ENCODE measurements at regions of chr11 and their contacts with region 1.

Region 1: DNA sequence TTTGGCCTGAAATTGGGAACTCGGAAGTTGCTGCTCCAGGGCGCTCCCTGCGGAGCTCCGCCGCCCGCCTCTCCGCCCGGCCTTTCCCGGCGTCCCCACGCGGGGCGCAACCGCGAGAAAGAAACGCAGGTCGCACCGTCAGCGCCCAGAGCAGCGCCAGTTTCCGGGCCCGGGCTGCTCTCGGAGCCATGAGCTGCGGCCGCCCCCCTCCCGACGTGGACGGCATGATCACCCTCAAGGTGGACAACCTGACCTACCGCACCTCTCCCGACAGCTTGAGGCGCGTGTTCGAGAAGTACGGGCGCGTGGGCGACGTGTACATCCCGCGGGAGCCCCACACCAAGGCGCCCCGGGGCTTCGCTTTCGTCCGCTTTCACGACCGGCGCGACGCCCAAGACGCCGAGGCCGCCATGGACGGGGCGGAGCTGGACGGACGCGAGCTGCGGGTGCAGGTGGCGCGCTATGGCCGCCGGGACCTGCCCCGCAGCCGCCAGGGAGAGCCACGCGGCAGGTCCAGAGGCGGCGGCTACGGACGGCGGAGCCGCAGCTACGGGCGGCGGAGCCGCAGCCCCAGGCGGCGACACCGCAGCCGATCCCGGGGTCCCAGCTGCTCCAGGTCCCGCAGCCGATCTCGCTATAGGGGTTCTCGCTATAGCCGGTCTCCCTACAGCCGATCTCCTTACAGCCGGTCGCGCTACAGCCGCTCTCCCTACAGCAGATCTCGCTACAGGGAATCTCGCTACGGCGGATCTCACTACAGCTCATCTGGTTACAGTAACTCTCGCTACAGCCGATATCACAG is 521 bp downstream of the SRSF8 start:
- DNase-seq: peak; percentile 62 to 79 (median 74)
- ATAC-seq: peak; percentile 81
- H3K4me3 ChIP-seq: peak overlapping the region; percentile 87
- H3K4me3 Mint-ChIP-seq: peak overlapping the region; percentile 93 to 100 (median 96)
- H3K27ac ChIP-seq: peak overlapping the region; percentile 96
- H3K27ac Mint-ChIP-seq: peak overlapping the region; percentile 93 to 100 (median 97)
- H3K4me1 ChIP-seq: peaks cover 16 to 17% of the 10 kb centered on the region in 2 donors
- H3K4me1 Mint-ChIP-seq: peaks cover 17 to 38% (median 30%) of the 10 kb centered on the region in 7 donors
- H3K27me3 ChIP-seq: no peaks in the 10 kb centered on the region
- H3K27me3 Mint-ChIP-seq: peaks cover 0 to 23% (median 0%) of the 10 kb centered on the region in 5 donors

Region 2: DNA sequence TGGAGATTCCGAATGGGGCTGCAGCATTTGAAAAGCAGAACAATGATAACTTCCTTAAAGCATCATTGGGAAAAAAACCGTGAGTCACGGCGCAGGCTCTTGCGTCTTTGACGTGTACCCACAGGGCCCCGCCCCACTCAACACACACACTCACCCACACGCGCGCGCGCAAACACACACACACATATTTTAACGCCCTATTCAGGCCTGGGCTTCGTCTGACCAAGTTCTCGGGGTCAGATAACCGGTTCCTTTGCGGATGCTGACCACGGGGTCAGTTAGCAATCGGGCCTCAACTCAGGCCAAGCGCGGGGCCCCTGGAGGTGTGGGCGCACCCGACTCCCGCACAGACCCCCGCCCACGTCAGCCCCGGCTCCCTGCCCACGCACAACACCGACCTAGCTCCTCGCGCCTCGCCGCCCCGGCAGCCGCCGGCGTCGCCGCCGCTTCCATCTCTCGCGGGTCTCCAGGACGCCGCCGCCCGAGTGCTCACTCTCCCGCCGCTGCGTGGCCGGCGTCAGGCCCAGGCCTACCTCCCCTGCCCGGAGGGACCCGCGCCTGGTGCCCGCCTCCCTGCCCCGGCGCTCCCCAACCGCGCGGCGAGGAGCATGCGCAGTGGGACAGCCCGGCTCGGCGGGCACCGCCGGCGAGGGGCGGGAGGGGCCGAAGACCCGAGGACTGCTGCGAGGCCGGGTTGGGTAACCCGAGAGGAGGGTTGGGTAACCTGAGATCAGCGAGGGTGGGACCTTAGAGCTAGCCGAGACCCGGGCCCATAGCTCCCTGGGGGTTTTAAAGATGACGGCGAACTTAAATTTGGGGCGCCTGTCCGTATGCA is 1869.6 kb before region 1 on chr11 and contains the start of gene SLC36A4:
- CTCF ChIA-PET with region 1: no interaction called
- POLR2A ChIA-PET with region 1: interaction called, 3 read pairs
- intact Hi-C with region 1: loop called (anchors 5 to 10 kb)
- DNase-seq: peak; percentile 78 to 90 (median 88)
- ATAC-seq: peak; percentile 94
- H3K4me3 ChIP-seq: peak within 1 kb of the TSS; percentile 54
- H3K4me3 Mint-ChIP-seq: peak within 1 kb of the TSS; percentile 88 to 98 (median 95)
- H3K27ac ChIP-seq: peak within 1 kb of the TSS; percentile 96
- H3K27ac Mint-ChIP-seq: peak within 1 kb of the TSS; percentile 87 to 99 (median 97)
- H3K4me1 ChIP-seq: peaks cover 0 to 4% of the 10 kb centered on the region in 2 donors
- H3K4me1 Mint-ChIP-seq: peaks cover 15 to 40% (median 30%) of the 10 kb centered on the region in 7 donors
- H3K27me3 ChIP-seq: no peaks in the 10 kb centered on the region
- H3K27me3 Mint-ChIP-seq: peaks cover 0 to 24% (median 5%) of the 10 kb centered on the region in 5 donors
- total RNA-seq, gene SLC36A4: 12.0 to 22.0 (median 20.0) TPM

Region 3: DNA sequence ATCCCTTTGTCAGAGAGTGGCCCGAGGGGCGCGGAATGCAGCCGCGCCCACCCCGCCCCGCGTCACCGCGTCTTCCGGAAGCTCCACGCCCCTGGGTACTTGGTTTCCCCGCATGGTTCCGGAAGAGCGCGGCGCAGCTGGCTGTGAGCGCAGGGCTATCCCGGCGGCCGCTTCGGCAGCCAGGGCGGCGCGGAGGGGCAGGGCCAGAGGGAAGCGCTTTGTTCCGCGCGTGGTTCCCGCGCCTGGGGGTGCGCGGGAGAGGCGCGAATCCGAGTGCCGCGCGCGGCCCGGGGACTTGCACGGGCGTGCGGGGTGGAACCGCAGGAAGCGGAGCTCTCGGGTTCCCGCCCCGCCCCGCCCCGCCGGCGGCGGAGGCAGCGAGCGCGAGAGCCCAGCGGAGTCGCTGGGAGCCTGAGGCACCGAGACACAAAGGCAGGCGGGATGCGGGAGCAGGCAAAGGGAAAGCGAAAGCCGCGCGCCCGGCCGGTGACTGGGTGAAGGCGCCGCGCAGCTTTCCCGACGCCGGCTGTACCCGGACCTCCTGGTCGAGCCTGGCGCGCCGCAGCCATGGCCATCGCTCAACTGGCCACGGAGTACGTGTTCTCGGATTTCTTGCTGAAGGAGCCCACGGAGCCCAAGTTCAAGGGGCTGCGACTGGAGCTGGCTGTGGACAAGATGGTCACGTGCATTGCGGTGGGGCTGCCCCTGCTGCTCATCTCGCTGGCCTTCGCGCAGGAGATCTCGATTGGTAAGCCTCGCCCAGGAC is 938.3 kb before region 1 on chr11 and contains the start of gene PANX1:
- CTCF ChIA-PET with region 1: no interaction called
- POLR2A ChIA-PET with region 1: no interaction called
- intact Hi-C with region 1: loop called in 1 of 2 experiments (anchors 10 kb)
- DNase-seq: peak; percentile 48 to 80 (median 74)
- ATAC-seq: peak; percentile 87
- H3K4me3 ChIP-seq: peak within 1 kb of the TSS; percentile 97
- H3K4me3 Mint-ChIP-seq: peak within 1 kb of the TSS in 2 of 10 donors; percentile 85 to 92
- H3K27ac ChIP-seq: peak within 1 kb of the TSS; percentile 73
- H3K27ac Mint-ChIP-seq: peak within 1 kb of the TSS; percentile 77 to 96 (median 89)
- H3K4me1 ChIP-seq: peaks cover 21 to 29% of the 10 kb centered on the region in 2 donors
- H3K4me1 Mint-ChIP-seq: peaks cover 18 to 32% (median 27%) of the 10 kb centered on the region in 7 donors
- H3K27me3 ChIP-seq: no peaks in the 10 kb centered on the region
- H3K27me3 Mint-ChIP-seq: no peaks in the 10 kb centered on the region
- total RNA-seq, gene PANX1: 5.6 to 14.8 (median 6.1) TPM

Region 4: GRCh38 chr11:94449437-94449836 is 617.8 kb before region 1 on chr11:
- CTCF ChIA-PET with region 1: no interaction called
- POLR2A ChIA-PET with region 1: no interaction called
- intact Hi-C with region 1: no loop called
- DNase-seq: no peak
- ATAC-seq: no peak
- H3K4me3 ChIP-seq: no peak overlapping the region
- H3K4me3 Mint-ChIP-seq: no peak overlapping the region
- H3K27ac ChIP-seq: no peak overlapping the region
- H3K27ac Mint-ChIP-seq: no peak overlapping the region
- H3K4me1 ChIP-seq: no peaks in the 10 kb centered on the region
- H3K4me1 Mint-ChIP-seq: no peaks in the 10 kb centered on the region
- H3K27me3 ChIP-seq: no peaks in the 10 kb centered on the region
- H3K27me3 Mint-ChIP-seq: no peaks in the 10 kb centered on the region

Region 5: DNA sequence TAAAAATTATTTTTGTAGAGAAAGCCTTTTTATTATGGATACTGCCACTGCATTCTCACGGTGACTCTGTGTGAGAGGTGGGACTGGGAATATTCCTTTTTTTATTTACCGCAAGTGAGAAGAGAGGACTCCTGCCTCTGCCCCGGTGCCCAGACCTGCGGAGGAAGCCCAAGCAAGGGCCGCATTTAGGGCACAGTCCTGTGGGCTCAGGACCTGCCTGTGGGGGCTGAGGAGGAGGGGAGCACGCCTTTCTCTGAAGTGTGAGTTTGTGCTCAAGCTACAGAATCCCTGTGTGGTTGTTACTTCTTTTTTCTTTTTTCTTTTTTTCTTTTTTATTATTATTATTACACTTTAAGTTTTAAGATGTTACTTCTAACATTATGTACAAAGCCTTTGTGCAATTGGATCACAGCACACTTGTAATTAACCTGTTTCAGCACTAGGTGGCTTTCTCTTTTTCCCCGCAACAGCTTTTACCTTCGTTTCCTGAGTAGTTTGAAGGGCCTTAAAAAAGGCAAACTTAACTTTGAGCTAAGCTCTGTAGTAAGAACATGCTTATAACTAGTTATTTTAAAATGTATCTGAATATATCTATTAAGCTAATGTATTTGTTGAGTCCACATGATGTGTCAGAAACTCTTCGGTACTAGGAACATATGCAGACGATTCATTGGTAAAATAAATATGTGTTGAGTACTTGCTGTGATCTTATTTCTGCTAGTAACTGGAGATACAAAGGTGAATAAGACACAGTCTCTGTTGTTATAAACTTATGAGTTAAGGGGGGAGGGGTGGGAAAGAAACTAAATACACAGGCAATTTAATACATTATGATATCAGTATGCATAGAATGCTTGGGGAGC is 280.7 kb before region 1 on chr11:
- CTCF ChIA-PET with region 1: no interaction called
- POLR2A ChIA-PET with region 1: no interaction called
- intact Hi-C with region 1: loop called in 1 of 2 experiments (anchors 10 kb)
- DNase-seq: peak in 5 of 9 donors; percentile 18 to 52 (median 42)
- ATAC-seq: peak; percentile 63
- H3K4me3 ChIP-seq: no peak overlapping the region
- H3K4me3 Mint-ChIP-seq: no peak overlapping the region
- H3K27ac ChIP-seq: no peak overlapping the region
- H3K27ac Mint-ChIP-seq: no peak overlapping the region
- H3K4me1 ChIP-seq: no peaks in the 10 kb centered on the region
- H3K4me1 Mint-ChIP-seq: peaks cover 0 to 3% (median 0%) of the 10 kb centered on the region in 7 donors
- H3K27me3 ChIP-seq: no peaks in the 10 kb centered on the region
- H3K27me3 Mint-ChIP-seq: peaks cover 5 to 23% (median 9%) of the 10 kb centered on the region in 5 donors

Region 6: DNA sequence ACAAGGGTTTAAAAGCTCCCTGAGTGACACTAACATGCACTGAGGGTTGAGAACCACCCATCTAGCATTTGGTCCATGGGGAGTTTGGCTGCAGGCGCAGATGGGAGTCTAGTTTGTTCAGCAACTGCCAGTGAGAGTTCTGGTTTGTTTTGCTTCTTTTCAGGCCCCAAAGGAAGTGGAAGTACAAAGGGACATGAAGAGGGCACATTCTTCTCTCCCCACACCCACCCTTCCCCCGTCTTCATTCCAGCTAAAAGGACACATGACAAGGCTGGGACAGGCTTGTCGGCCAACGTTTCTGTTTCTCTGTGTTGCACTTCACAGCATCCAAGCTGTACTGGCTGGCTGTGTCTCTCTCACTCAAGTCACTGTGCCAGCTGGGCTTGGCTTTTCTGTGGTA is 14.2 kb after region 1 on chr11:
- CTCF ChIA-PET with region 1: interaction called, 6 read pairs
- POLR2A ChIA-PET with region 1: interaction called, 11 read pairs
- intact Hi-C with region 1: no loop called
- DNase-seq: no peak
- ATAC-seq: no peak
- H3K4me3 ChIP-seq: no peak overlapping the region
- H3K4me3 Mint-ChIP-seq: no peak overlapping the region
- H3K27ac ChIP-seq: no peak overlapping the region
- H3K27ac Mint-ChIP-seq: no peak overlapping the region
- H3K4me1 ChIP-seq: peaks cover 0 to 7% of the 10 kb centered on the region in 2 donors
- H3K4me1 Mint-ChIP-seq: peaks cover 0 to 44% (median 3%) of the 10 kb centered on the region in 7 donors
- H3K27me3 ChIP-seq: no peaks in the 10 kb centered on the region
- H3K27me3 Mint-ChIP-seq: no peaks in the 10 kb centered on the region

Region 7: DNA sequence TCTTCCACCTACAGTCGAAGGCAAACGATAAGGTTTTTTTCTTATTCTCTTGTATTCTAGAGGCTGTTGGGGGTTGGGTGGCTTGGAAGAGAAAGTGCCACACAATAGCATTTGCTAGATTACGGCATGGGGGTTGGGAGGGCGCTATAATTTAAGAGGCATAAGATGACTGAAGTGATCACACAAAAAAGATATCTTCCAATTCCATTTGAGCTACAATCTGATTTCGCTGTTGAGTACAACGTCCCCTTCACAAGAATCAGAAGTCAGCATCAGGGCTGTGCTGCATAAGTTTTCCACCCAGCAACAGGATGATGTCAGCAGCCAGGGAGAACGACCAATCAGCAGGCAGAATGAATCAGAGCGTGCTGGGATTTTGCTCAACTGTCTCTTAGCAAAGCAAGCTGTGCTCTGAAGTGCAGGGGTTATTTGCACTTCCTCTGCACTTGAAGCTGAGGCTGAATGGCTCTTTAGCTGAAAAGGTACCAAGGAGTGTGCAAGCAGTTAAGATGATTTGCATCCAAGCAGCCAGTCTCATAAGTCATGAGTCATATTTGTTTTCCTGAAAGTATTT is 187.0 kb after region 1 on chr11:
- CTCF ChIA-PET with region 1: no interaction called
- POLR2A ChIA-PET with region 1: no interaction called
- intact Hi-C with region 1: loop called (anchors 2 to 5 kb)
- DNase-seq: peak; percentile 45 to 91 (median 84)
- ATAC-seq: peak; percentile 98
- H3K4me3 ChIP-seq: peak overlapping the region; percentile 52
- H3K4me3 Mint-ChIP-seq: peak overlapping the region; percentile 74 to 98 (median 89)
- H3K27ac ChIP-seq: peak overlapping the region; percentile 71
- H3K27ac Mint-ChIP-seq: peak overlapping the region; percentile 81 to 98 (median 90)
- H3K4me1 ChIP-seq: peaks cover 13 to 31% of the 10 kb centered on the region in 2 donors
- H3K4me1 Mint-ChIP-seq: peaks cover 20 to 59% (median 53%) of the 10 kb centered on the region in 7 donors
- H3K27me3 ChIP-seq: no peaks in the 10 kb centered on the region
- H3K27me3 Mint-ChIP-seq: no peaks in the 10 kb centered on the region

Region 8: GRCh38 chr11:95790123-95790932 is 723.1 kb after region 1 on chr11 and contains the start of gene CEP57:
- CTCF ChIA-PET with region 1: interaction called, 3 read pairs
- POLR2A ChIA-PET with region 1: interaction called, 55 read pairs
- intact Hi-C with region 1: loop called (anchors 1 kb)
- DNase-seq: peak; percentile 80 to 98 (median 96)
- ATAC-seq: peak; percentile 70
- H3K4me3 ChIP-seq: peak within 1 kb of the TSS; percentile 97
- H3K4me3 Mint-ChIP-seq: peak within 1 kb of the TSS; percentile 93 to 100 (median 100)
- H3K27ac ChIP-seq: peak within 1 kb of the TSS; percentile 99
- H3K27ac Mint-ChIP-seq: peak within 1 kb of the TSS; percentile 100
- H3K4me1 ChIP-seq: peaks cover 21 to 22% of the 10 kb centered on the region in 2 donors
- H3K4me1 Mint-ChIP-seq: peaks cover 47 to 74% (median 61%) of the 10 kb centered on the region in 7 donors
- H3K27me3 ChIP-seq: no peaks in the 10 kb centered on the region
- H3K27me3 Mint-ChIP-seq: no peaks in the 10 kb centered on the region
- total RNA-seq, gene CEP57: 47.8 to 72.3 (median 68.9) TPM